Vagina (tissue), 2 donors: ENCODE measurements at regions of chr1 and their contacts with region 1.

Region 1: DNA sequence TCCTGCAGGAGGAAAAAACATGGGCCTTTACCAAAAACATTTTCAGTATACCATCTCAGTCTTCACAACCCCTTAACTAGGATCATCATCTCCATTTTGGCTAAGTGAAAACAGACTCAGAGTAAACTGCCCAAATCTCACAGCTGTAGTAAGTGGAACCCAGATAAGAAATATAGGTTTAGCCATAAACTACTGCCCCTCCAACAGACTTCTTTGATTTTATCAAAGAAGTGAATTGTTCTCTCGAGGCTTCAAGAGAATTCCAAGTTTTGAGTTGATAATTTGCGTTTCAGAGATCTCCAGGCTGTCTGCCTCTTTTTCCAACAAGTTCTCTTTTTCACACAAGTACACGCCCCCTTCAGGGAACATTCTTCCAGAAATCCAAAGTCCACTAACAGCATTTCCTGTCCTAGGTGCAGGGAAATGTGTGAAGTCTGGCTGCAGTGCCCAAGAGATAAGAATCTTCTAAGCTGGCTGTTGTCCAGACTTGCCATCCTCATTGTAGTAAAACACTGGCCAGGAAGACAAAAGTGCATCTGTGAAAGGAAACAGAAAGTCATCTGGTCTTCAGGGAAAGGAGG is 30.8 kb downstream of the RNF19B start:
- DNase-seq: no peak
- H3K4me3 ChIP-seq: no peak overlapping the region
- H3K27ac ChIP-seq: peak overlapping the region; percentile 52
- H3K4me1 ChIP-seq: peaks cover 14% of the 10 kb centered on the region
- H3K27me3 ChIP-seq: no peaks in the 10 kb centered on the region
- CTCF ChIP-seq: peak in 1 of 3 experiments; percentile 10
- POLR2A ChIP-seq: no peak

Region 2: DNA sequence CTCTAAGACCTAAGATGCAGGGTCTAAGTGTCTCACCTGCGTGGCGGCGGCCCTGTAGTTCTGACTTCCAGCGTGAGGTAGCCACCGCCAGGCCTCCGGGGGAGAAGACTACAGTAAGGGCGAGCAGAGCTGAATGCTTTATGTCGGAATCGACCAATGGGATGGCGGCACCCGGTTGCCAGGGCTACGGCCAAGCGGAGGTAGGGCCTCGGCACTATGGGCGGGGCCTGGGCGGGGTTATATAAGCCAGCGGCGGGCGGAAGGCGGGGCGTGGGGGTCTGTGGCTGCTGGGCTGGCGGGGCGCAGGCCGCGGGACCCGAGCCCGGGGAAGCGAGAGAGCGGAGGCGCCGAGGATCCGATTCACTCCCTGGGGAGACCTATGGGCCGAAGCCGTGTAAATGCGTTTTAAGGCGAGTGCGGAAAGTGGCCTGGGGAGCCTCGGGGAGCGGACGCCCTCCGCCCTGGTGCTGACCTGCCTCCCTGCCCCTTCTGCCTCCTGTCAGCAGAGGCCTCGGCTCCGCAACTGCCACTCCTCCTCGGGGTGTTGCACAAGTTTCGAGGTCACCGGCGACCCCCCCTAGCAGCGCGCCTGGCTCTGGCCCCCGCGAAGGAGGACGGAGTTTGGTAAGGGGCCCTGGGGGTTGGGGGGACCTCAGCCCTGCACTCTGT is 147.2 kb after region 1 on chr1 and contains the start of gene AZIN2:
- intact Hi-C with region 1: loop called (anchors 5 kb)
- DNase-seq: peak in 1 of 2 donors; percentile 96
- H3K4me3 ChIP-seq: peak within 1 kb of the TSS; percentile 63 to 66
- H3K27ac ChIP-seq: peak within 1 kb of the TSS; percentile 53
- H3K4me1 ChIP-seq: peaks cover 21% of the 10 kb centered on the region
- H3K27me3 ChIP-seq: no peaks in the 10 kb centered on the region
- CTCF ChIP-seq: no peak
- POLR2A ChIP-seq: peak in 1 of 2 donors; percentile 72
- total RNA-seq, gene AZIN2: 7.9 TPM